PC-9 (cell line): ENCODE measurements at regions of chr16 and their contacts with region 1.

Region 1: GRCh38 chr16:56324406-56324805 is 100.9 kb downstream of the AMFR start:
- DNase-seq: peak; percentile 95 to 97
- H3K4me3 ChIP-seq: no peak overlapping the region
- H3K27ac ChIP-seq: peak overlapping the region; percentile 94
- H3K4me1 ChIP-seq: peaks cover 48% of the 10 kb centered on the region
- H3K27me3 ChIP-seq: no peaks in the 10 kb centered on the region
- CTCF ChIP-seq: no peak

Region 2: DNA sequence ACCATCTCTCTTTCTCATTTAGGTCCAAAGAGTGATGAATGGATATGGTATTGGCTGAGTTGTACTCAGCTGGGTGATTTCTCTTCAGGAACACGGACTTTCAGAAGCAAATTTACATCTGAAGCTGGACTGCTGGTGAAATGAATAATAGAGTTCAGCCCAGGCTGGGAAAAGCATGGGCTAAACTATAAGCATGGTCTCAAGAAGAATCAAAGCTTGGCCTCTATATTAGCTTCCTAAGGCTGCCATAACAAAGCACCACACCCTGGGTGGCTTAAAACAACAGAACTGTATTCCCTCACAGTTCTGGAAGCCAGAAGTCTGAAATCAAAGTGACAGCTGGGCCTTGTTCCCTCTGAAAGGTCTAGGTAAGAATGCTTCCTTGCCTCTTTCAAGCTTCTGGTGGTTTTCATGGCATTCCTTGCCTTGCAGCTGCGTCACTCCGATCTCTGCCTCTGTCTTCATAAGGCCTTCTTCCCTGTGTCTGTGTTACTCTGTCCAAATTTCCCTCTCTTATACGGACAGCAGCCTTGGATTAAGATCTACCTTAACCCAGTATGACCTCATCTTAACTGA is 359.4 kb before region 1 on chr16:
- CTCF ChIA-PET with region 1: no interaction called
- POLR2A ChIA-PET with region 1: no interaction called
- intact Hi-C with region 1: loop called (anchors 1 kb)
- DNase-seq: peak in 1 of 2 experiments; percentile 10
- H3K4me3 ChIP-seq: no peak overlapping the region
- H3K27ac ChIP-seq: no peak overlapping the region
- H3K4me1 ChIP-seq: peaks cover 34% of the 10 kb centered on the region
- H3K27me3 ChIP-seq: no peaks in the 10 kb centered on the region
- CTCF ChIP-seq: no peak

Region 3: DNA sequence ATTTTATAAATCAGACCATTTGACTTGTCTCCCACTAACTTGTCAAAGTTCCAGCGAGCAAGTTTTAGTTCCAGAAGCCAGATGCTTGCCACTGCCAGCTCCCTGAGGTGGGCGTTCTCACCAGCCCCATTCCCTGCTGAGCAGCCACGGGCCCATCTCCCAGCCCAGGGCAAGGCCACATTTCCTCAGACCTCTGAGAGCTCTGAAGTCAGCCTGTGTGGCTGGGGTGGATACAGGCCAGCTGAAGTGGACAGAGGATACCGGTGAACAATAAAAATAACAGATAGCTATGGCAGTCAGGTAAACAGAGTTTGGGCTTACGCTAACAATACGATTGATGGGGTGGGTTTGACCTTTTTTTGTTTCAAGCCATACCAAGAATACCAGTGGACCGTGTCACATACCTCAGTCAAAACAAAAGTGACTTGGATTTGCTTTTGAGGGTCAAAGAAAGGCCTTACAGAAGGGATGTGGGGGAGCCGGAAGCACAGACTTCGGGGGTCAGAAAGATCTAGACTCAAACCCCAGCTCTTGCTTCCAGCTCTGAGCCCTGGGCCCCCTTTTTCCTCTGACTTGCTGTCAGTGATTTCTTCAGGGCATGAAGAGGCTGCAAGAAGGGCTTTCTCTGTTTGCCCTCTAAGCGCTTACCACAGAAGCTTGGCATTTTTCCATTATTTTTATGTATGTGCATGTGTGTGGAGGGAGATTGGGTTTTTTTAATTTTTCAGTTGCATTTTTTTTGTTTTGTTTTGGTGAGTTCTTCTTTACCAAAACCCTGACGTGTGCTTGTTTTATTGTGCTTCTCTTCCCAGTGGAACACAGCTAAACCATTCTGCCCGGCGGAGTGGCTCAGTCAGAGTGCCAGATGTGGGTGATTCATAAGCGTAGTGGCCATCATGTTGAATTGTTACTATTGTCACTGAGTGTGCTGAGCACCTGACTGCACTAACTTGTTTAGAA is 23.2 kb before region 1 on chr16:
- CTCF ChIA-PET with region 1: no interaction called
- POLR2A ChIA-PET with region 1: no interaction called
- intact Hi-C with region 1: loop called (anchors 1 kb)
- DNase-seq: peak in 1 of 2 experiments; percentile 56
- H3K4me3 ChIP-seq: no peak overlapping the region
- H3K27ac ChIP-seq: no peak overlapping the region
- H3K4me1 ChIP-seq: peaks cover 10% of the 10 kb centered on the region; the same call in 1 of the 2 replicates
- H3K27me3 ChIP-seq: no peaks in the 10 kb centered on the region
- CTCF ChIP-seq: no peak

Region 4: GRCh38 chr16:56425439-56425832 is 101.0 kb after region 1 on chr16 and contains the start of gene AMFR:
- CTCF ChIA-PET with region 1: no interaction called
- POLR2A ChIA-PET with region 1: no interaction called
- intact Hi-C with region 1: loop called (anchors 2 kb)
- DNase-seq: peak; percentile 57 to 82
- H3K4me3 ChIP-seq: peak within 1 kb of the TSS; percentile 64
- H3K27ac ChIP-seq: peak within 1 kb of the TSS; percentile 27
- H3K4me1 ChIP-seq: peaks cover 43% of the 10 kb centered on the region
- H3K27me3 ChIP-seq: no peaks in the 10 kb centered on the region
- CTCF ChIP-seq: no peak; the same call in 1 of the 2 replicates
- total RNA-seq, gene AMFR: 89.4 and 132 TPM in 2 replicates

Region 5: GRCh38 chr16:56708525-56709442 is 384.4 kb after region 1 on chr16:
- CTCF ChIA-PET with region 1: no interaction called
- POLR2A ChIA-PET with region 1: no interaction called
- intact Hi-C with region 1: loop called (anchors 10 kb)
- DNase-seq: no peak
- H3K4me3 ChIP-seq: no peak overlapping the region
- H3K27ac ChIP-seq: no peak overlapping the region
- H3K4me1 ChIP-seq: no peaks in the 10 kb centered on the region
- H3K27me3 ChIP-seq: no peaks in the 10 kb centered on the region
- CTCF ChIP-seq: no peak